OCI-LY7 (cell line): ENCODE measurements at regions of chr5 and their contacts with region 1.

Region 1: GRCh38 chr5:128254789-128255188 is 171.2 kb downstream of the SLC12A2 start:
- DNase-seq: no peak
- H3K4me3 ChIP-seq: no peak overlapping the region
- H3K27ac ChIP-seq: no peak overlapping the region
- H3K4me1 ChIP-seq: no peaks in the 10 kb centered on the region
- CTCF ChIP-seq: no peak

Region 2: GRCh38 chr5:126818736-126819135 is 1436.1 kb before region 1 on chr5:
- CTCF ChIA-PET with region 1: no interaction called
- POLR2A ChIA-PET with region 1: no interaction called
- intact Hi-C with region 1: no loop called
- DNase-seq: no peak
- H3K4me3 ChIP-seq: no peak overlapping the region
- H3K27ac ChIP-seq: no peak overlapping the region
- H3K4me1 ChIP-seq: no peaks in the 10 kb centered on the region
- CTCF ChIP-seq: no peak

Region 3: GRCh38 chr5:128228008-128228407 is 26.8 kb before region 1 on chr5:
- CTCF ChIA-PET with region 1: no interaction called
- POLR2A ChIA-PET with region 1: interaction called, 6 read pairs
- intact Hi-C with region 1: loop called (anchors 2 kb)
- DNase-seq: no peak
- H3K4me3 ChIP-seq: no peak overlapping the region
- H3K27ac ChIP-seq: no peak overlapping the region
- H3K4me1 ChIP-seq: no peaks in the 10 kb centered on the region
- CTCF ChIP-seq: no peak

Region 4: GRCh38 chr5:128241051-128241695 is 13.6 kb before region 1 on chr5:
- CTCF ChIA-PET with region 1: no interaction called
- POLR2A ChIA-PET with region 1: no interaction called
- intact Hi-C with region 1: no loop called
- DNase-seq: no peak
- H3K4me3 ChIP-seq: no peak overlapping the region
- H3K27ac ChIP-seq: no peak overlapping the region
- H3K4me1 ChIP-seq: no peaks in the 10 kb centered on the region
- CTCF ChIP-seq: no peak